ENCODE measurements at regions of chr17 and their contacts with region 1.

Region 1: GRCh38 chr17:17694169-17695081 is 13.2 kb downstream of the RAI1 start:
- DNase-seq: peak; percentile 71
- H3K4me3 ChIP-seq: peak overlapping the region; percentile 49 to 63 (median 57)
- H3K27ac ChIP-seq: peak overlapping the region; percentile 84
- H3K4me1 ChIP-seq: peaks cover 87% of the 10 kb centered on the region
- H3K27me3 ChIP-seq: no peaks in the 10 kb centered on the region
- CTCF ChIP-seq: no peak

Region 2: DNA sequence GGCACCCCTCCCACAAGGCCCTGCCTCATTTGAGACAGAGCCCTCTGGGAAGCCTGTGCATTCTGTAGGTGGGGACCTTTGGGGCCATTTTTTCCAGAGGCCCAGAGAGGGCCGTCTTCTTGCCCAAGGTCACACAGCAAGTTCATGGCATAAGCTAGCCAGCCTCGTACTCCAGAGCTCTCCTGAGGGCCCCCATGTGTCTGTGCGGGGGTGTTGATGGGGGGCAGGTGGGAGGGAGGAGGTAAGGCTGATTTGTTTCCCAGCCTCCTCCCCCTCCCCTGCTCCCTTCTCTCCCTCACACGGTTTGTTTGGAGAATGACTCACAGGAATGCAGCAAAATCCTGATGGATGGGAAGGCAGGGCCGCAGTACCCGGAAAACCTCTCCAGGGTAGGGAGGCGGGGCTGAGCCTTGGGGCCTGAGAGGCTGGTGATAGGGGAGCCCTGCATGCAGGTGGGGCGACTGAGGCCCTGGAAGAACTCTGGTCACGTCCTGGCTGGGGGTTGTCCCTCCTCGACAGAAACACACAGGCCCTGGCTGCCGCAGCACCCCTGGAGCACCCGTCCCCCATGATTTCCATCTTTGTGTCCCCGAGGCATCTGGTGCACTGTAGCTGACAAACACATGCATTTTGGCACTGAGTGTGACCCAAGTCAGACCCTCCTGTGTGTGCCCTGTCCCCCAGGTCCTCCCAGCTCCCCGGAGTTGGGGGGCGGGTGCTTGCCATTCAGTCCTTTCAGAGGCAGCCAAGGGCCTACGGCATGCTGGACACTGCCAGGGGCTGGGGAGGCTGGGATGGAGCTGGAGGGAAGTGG is 16.5 kb after region 1 on chr17:
- CTCF ChIA-PET with region 1: no interaction called
- dilution Hi-C with region 1: no loop called
- in situ Hi-C with region 1: no loop called
- intact Hi-C with region 1: loop called (anchors 2 kb)
- DNase-seq: peak; percentile 86
- H3K4me3 ChIP-seq: peak overlapping the region in 1 of 3 experiments; percentile 4
- H3K27ac ChIP-seq: peak overlapping the region; percentile 38
- H3K4me1 ChIP-seq: peaks cover 47% of the 10 kb centered on the region
- H3K27me3 ChIP-seq: no peaks in the 10 kb centered on the region
- CTCF ChIP-seq: no peak

Region 3: GRCh38 chr17:17766077-17766743 is 71.8 kb after region 1 on chr17:
- CTCF ChIA-PET with region 1: no interaction called
- dilution Hi-C with region 1: loop called (anchors 5 kb)
- in situ Hi-C with region 1: no loop called
- intact Hi-C with region 1: no loop called
- DNase-seq: no peak
- H3K4me3 ChIP-seq: no peak overlapping the region
- H3K27ac ChIP-seq: no peak overlapping the region
- H3K4me1 ChIP-seq: peaks cover 14% of the 10 kb centered on the region
- H3K27me3 ChIP-seq: no peaks in the 10 kb centered on the region
- CTCF ChIP-seq: no peak